HEK293 (cell line): ENCODE measurements at regions of chr6 and their contacts with region 1.

Region 1: DNA sequence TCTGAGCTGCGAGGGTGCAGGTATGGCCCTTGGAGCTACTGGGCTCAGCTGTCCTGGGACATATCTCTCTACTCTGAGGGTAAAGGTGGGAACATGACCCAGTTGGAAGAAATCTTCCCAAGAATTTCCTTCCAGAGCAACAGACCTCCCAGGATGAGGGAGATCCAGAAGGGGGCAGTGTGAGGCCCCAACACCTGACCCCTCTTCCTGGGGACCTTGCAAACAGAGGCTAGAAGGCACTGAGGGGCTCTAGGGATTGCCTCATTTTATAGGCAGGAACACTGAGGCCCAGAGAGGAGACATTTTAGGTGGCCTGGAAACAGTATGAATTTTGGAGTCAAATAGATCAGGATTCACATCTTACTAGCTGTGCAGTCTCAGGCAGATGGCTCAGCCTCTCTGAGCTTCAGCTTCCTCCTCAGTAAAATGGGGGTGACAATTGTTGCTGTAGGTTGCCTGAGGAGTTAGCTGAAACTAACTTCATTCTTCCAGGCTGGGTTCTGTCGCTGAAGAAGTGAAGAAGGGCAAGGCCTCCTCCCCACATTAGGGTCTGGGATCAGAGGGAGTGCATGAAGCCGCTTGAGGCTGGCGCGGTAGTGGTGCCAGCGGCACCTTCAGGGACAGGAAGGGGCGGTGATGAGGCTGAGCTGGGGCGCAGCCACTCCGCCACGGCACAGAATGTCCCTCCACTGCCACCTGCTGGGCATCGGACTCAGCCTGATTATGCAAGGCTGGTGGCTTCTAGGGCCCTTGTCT is 11.4 kb downstream of the KCNK17 start:
- H3K4me3 ChIP-seq: no peak overlapping the region
- H3K27ac ChIP-seq: no peak overlapping the region
- H3K4me1 ChIP-seq: no peaks in the 10 kb centered on the region
- CTCF ChIP-seq: peak; percentile 96

Region 2: GRCh38 chr6:38982470-38982869 is 320.4 kb before region 1 on chr6:
- CTCF ChIA-PET with region 1: interaction called, 167 read pairs
- POLR2A ChIA-PET with region 1: no interaction called
- H3K4me3 ChIP-seq: no peak overlapping the region
- H3K27ac ChIP-seq: no peak overlapping the region
- H3K4me1 ChIP-seq: peaks cover 18% of the 10 kb centered on the region
- CTCF ChIP-seq: no peak

Region 3: DNA sequence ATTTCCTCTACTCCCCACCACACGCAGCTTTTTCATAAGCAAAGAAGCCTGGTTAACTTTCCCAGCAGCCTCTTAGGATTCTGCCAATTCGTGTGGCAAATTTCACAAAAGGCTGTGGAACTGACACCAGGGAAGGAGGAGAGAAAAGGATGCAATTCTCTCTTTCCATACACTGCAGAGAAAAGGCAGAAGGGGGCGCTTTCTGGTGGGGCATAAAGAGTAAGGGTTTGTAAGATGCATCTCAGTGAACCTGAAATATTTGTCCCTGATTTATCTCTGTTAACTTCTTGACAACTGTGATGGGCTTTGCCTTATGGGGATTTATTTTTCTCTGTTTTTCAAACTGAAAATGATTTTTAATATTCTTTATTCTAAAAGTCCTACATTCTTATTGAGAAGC is 299.8 kb before region 1 on chr6:
- CTCF ChIA-PET with region 1: interaction called, 33 read pairs
- POLR2A ChIA-PET with region 1: no interaction called
- H3K4me3 ChIP-seq: no peak overlapping the region
- H3K27ac ChIP-seq: no peak overlapping the region
- H3K4me1 ChIP-seq: no peaks in the 10 kb centered on the region
- CTCF ChIP-seq: no peak

Region 4: GRCh38 chr6:39166189-39166911 is 136.5 kb before region 1 on chr6:
- CTCF ChIA-PET with region 1: interaction called, 453 read pairs
- POLR2A ChIA-PET with region 1: no interaction called
- H3K4me3 ChIP-seq: no peak overlapping the region
- H3K27ac ChIP-seq: no peak overlapping the region
- H3K4me1 ChIP-seq: no peaks in the 10 kb centered on the region
- CTCF ChIP-seq: peak; percentile 96

Region 5: GRCh38 chr6:39228992-39229767 is 73.7 kb before region 1 on chr6 and contains the start of gene KCNK5:
- CTCF ChIA-PET with region 1: interaction called, 18 read pairs
- POLR2A ChIA-PET with region 1: interaction called, 6 read pairs
- H3K4me3 ChIP-seq: peak within 1 kb of the TSS; percentile 49
- H3K27ac ChIP-seq: peak within 1 kb of the TSS; percentile 6; the same call in 1 of the 2 replicates
- H3K4me1 ChIP-seq: no peaks in the 10 kb centered on the region
- CTCF ChIP-seq: peak; percentile 88